K562 (cell line): ENCODE measurements at regions of chr11 and their contacts with region 1.

Region 1: GRCh38 chr11:74412321-74412720 is 14.1 kb upstream of the PGM2L1 start:
- DNase-seq: no peak
- ATAC-seq: no peak
- H3K4me3 ChIP-seq: no peak overlapping the region
- H3K27ac ChIP-seq: no peak overlapping the region
- H3K4me1 ChIP-seq: no peaks in the 10 kb centered on the region
- H3K27me3 ChIP-seq: peaks cover 8 to 10% of the 10 kb centered on the region in 2 experiments; a peak in 3 of 5 replicates
- CTCF ChIP-seq: no peak
- EP300 ChIP-seq: no peak
- POLR2A ChIP-seq: no peak
- RAD21 ChIP-seq: no peak

Region 2: GRCh38 chr11:74398244-74399159 is 13.8 kb before region 1 on chr11 and contains the start of gene PGM2L1:
- CTCF ChIA-PET with region 1: no interaction called
- POLR2A ChIA-PET with region 1: interaction called, 11 read pairs
- in situ Hi-C with region 1: no loop called
- intact Hi-C with region 1: no loop called
- DNase-seq: peak; percentile 91 to 97 (median 92)
- ATAC-seq: peak; percentile 96
- H3K4me3 ChIP-seq: peak within 1 kb of the TSS; percentile 71
- H3K27ac ChIP-seq: peak within 1 kb of the TSS; percentile 87
- H3K4me1 ChIP-seq: peaks cover 0 to 7% of the 10 kb centered on the region in 2 experiments; a peak in 3 of 5 replicates
- H3K27me3 ChIP-seq: no peaks in the 10 kb centered on the region; a peak in 1 of 5 replicates
- CTCF ChIP-seq: no peak
- EP300 ChIP-seq: peak; percentile 21
- POLR2A ChIP-seq: peak; percentile 82
- RAD21 ChIP-seq: no peak
- polyA plus RNA-seq, gene PGM2L1: 0.32 to 0.46 TPM

Region 3: GRCh38 chr11:74427385-74427886 is 15.1 kb after region 1 on chr11:
- CTCF ChIA-PET with region 1: no interaction called
- POLR2A ChIA-PET with region 1: interaction called, 11 read pairs
- in situ Hi-C with region 1: no loop called
- intact Hi-C with region 1: no loop called
- DNase-seq: no peak
- ATAC-seq: no peak
- H3K4me3 ChIP-seq: no peak overlapping the region
- H3K27ac ChIP-seq: no peak overlapping the region
- H3K4me1 ChIP-seq: no peaks in the 10 kb centered on the region
- H3K27me3 ChIP-seq: peaks cover 0 to 4% of the 10 kb centered on the region in 2 experiments; a peak in 2 of 5 replicates
- CTCF ChIP-seq: no peak
- EP300 ChIP-seq: no peak
- POLR2A ChIP-seq: no peak
- RAD21 ChIP-seq: no peak

Region 4: GRCh38 chr11:74473382-74474173 is 61.3 kb after region 1 on chr11:
- CTCF ChIA-PET with region 1: no interaction called
- POLR2A ChIA-PET with region 1: no interaction called
- in situ Hi-C with region 1: no loop called
- intact Hi-C with region 1: no loop called
- DNase-seq: no peak
- ATAC-seq: no peak
- H3K4me3 ChIP-seq: no peak overlapping the region
- H3K27ac ChIP-seq: no peak overlapping the region
- H3K4me1 ChIP-seq: peaks cover 0 to 9% of the 10 kb centered on the region in 2 experiments; a peak in 1 of 5 replicates
- H3K27me3 ChIP-seq: no peaks in the 10 kb centered on the region; a peak in 1 of 5 replicates
- CTCF ChIP-seq: no peak
- EP300 ChIP-seq: no peak
- POLR2A ChIP-seq: no peak
- RAD21 ChIP-seq: no peak